Ascending aorta (tissue), 2 donors: ENCODE measurements at regions of chr11 and their contacts with region 1.

Region 1: DNA sequence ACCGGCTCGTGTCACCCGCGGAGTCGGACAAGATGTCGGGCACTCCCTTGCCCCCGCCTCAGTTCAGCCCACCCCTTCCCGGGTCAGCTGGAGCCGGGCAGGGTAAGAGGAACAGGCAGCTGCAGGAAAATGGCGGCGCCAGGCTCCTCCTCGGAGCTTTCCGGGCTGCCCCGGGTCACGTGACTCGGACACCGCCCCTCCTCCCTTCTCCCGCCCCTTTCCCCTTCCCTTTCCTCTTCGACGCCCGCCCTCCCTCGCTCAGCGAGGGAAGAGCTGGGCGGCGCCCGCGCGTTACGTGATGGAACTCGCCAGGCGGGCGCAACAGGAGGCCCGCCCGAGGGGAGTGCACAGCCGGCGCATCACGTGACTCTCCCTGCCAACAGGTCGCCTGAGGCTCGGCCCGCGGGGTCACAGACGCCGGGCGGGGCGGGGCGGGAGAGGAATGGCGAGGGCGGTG is at the start of gene PICALM:
- DNase-seq: peak; percentile 95 to 99
- H3K4me3 ChIP-seq: peak within 1 kb of the TSS; percentile 77 to 96
- H3K27ac ChIP-seq: peak within 1 kb of the TSS; percentile 95 to 99
- H3K4me1 ChIP-seq: peaks cover 5 to 22% of the 10 kb centered on the region in 2 donors
- H3K27me3 ChIP-seq: no peaks in the 10 kb centered on the region
- CTCF ChIP-seq: no peak
- total RNA-seq, gene PICALM: 158 TPM

Region 2: GRCh38 chr11:85664615-85665481 is 404.1 kb before region 1 on chr11 and contains the start of gene CREBZF:
- intact Hi-C with region 1: loop called (anchors 10 kb)
- DNase-seq: peak; percentile 80 to 97
- H3K4me3 ChIP-seq: peak within 1 kb of the TSS; percentile 74 to 90
- H3K27ac ChIP-seq: peak within 1 kb of the TSS; percentile 99
- H3K4me1 ChIP-seq: peaks cover 0 to 25% of the 10 kb centered on the region in 2 donors
- H3K27me3 ChIP-seq: no peaks in the 10 kb centered on the region
- CTCF ChIP-seq: peak in 1 of 3 experiments; percentile 7
- total RNA-seq, gene CREBZF: 29.7 TPM

Region 3: DNA sequence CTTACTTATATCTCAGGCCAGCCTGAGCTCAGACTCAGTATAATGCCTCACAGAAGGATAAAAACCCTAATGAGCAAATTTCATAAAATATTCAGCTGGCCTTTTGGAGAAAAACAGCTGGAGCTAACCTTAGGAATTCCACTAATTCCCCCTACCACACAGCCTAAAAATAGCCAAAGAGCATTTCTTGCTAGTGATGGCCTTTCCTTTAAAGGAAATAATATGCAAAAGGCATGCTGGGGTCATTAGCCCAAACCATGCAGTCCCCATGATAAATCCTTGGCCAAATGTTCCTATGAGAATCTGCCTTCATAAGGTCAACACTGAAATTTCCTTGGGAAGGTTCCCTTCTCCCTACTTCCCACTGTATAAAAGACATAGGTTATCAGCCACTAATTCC is 296.3 kb before region 1 on chr11:
- intact Hi-C with region 1: no loop called
- DNase-seq: no peak
- H3K4me3 ChIP-seq: no peak overlapping the region
- H3K27ac ChIP-seq: peak overlapping the region; percentile 12 to 29
- H3K4me1 ChIP-seq: peaks cover 0 to 9% of the 10 kb centered on the region in 2 donors
- H3K27me3 ChIP-seq: no peaks in the 10 kb centered on the region
- CTCF ChIP-seq: no peak

Region 4: GRCh38 chr11:86041975-86042378 is 27.0 kb before region 1 on chr11:
- intact Hi-C with region 1: loop called (anchors 2 kb)
- DNase-seq: peak in 1 of 2 donors; percentile 87
- H3K4me3 ChIP-seq: peak overlapping the region; percentile 47 to 52
- H3K27ac ChIP-seq: peak overlapping the region; percentile 48 to 61
- H3K4me1 ChIP-seq: peaks cover 11 to 65% of the 10 kb centered on the region in 2 donors
- H3K27me3 ChIP-seq: no peaks in the 10 kb centered on the region
- CTCF ChIP-seq: peak; percentile 81 to 85 (median 82)

Region 5: DNA sequence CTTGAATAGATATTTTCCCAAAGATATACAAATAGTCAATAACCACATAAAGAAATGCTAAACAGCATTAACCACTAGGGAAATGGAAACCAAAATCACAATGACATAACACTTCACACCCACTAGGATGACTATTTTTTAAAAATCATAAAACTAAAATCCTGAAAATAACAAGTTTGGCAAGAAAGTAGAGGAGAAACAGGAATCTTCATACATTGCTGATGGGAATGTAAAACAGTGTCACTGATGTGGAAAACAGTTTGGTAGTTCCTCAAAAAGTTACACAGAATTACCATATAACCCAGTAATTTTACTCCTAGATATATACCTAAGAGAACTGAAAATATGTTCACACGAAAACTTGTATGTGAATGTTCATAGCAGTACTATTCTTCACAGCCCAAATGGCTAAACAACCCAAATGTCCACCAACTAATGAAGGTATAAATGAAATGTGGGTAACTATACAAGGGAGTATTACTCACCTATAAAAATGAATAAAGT is 12.6 kb before region 1 on chr11:
- intact Hi-C with region 1: no loop called
- DNase-seq: no peak
- H3K4me3 ChIP-seq: no peak overlapping the region
- H3K27ac ChIP-seq: no peak overlapping the region
- H3K4me1 ChIP-seq: peaks cover 12 to 34% of the 10 kb centered on the region in 2 donors
- H3K27me3 ChIP-seq: no peaks in the 10 kb centered on the region
- CTCF ChIP-seq: no peak

Region 6: GRCh38 chr11:86151174-86152005 is 82.4 kb after region 1 on chr11:
- intact Hi-C with region 1: loop called (anchors 1 kb)
- DNase-seq: peak; percentile 22 to 86
- H3K4me3 ChIP-seq: peak overlapping the region in 1 of 2 donors; percentile 18
- H3K27ac ChIP-seq: peak overlapping the region; percentile 71 to 82
- H3K4me1 ChIP-seq: peaks cover 7 to 30% of the 10 kb centered on the region in 2 donors
- H3K27me3 ChIP-seq: no peaks in the 10 kb centered on the region
- CTCF ChIP-seq: no peak

Region 7: DNA sequence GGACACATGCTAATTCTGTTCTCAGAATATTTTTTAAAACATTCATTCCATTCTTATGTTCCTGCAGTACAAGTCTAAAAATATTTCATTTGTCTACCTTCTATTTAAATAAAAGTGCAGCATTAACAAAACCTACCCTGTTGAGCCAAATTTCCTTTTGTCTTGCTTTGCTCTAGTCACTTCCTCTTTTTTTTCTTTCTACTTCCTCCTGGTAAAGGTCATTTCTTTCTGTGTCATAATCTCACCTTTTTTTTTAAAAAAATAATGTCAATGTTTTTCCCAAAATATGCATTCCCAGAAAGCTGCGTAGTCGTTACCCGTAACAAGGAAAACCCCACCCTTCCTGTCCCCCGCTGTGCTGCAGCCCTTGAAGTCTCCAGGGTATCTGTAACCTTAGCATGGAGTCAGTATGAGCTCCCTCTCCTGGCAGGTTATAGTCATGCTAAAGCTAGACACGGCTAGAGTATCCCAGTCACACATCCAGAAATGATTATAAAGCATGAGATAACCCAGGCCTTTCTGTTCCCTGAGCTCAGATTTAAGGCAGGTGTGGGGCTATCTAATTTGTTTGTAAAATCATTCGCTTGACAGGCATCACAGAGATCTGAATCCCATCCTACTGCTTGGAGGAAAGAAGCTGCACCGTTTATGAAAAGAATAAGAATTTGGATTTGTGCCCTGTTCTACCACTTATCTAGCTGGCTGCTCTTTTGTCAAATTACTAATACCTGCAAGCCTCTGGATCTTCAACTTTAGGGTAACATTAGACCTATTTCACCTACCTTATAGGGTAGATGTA is 124.5 kb after region 1 on chr11:
- intact Hi-C with region 1: loop called (anchors 2 kb)
- DNase-seq: peak; percentile 19 to 86
- H3K4me3 ChIP-seq: peak overlapping the region; percentile 0 to 27
- H3K27ac ChIP-seq: peak overlapping the region; percentile 35 to 49
- H3K4me1 ChIP-seq: peaks cover 4% of the 10 kb centered on the region in 2 donors
- H3K27me3 ChIP-seq: no peaks in the 10 kb centered on the region
- CTCF ChIP-seq: peak; percentile 68 to 72 (median 70)

Region 8: DNA sequence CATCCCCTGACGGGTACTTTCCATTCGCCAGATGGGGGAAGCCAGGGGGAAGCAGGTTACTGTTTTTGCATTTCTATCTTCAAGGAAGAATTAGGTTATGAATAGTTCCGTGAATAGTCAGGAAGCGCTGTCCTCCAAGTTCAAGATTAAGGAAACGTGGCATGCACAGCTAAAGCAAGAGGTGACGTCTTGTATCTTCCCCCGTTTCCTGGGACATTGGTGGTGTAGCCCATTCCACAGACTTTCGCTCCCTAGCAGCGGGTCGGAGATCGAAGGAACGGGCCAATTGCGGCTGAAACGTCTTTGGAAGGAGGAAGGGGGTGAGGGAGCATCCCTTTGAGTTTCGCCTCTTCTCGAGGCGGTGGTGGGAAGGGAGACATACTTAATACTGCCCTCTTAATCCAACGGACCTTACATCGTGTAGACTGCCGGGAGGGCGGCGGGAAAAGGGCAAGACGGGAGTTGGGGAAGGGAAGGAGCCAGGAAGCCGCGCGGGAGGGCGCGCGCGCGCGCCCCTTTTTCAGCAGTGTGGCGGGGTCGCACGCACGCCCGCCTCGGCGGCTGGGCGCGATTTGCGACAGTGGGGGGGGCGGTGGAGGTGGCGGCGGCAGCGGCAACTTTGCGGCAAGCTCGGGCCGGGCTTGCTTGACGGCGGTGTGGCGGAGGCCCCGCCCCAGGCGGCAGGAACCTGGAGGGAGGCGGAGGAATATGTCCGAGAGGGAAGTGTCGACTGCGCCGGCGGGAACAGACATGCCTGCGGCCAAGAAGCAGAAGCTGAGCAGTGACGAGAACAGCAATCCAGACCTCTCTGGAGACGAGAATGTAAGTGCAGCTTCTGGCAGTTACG is 175.8 kb after region 1 on chr11 and contains the start of gene EED:
- intact Hi-C with region 1: loop called (anchors 2 kb)
- DNase-seq: peak; percentile 67 to 96
- H3K4me3 ChIP-seq: peak within 1 kb of the TSS; percentile 86 to 94
- H3K27ac ChIP-seq: peak within 1 kb of the TSS; percentile 98 to 99
- H3K4me1 ChIP-seq: peaks cover 3 to 15% of the 10 kb centered on the region in 2 donors
- H3K27me3 ChIP-seq: no peaks in the 10 kb centered on the region
- CTCF ChIP-seq: no peak
- total RNA-seq, gene EED: 16.1 TPM